Body of pancreas (tissue), 4 donors: ENCODE measurements at regions of chr13 and their contacts with region 1.

Region 1: DNA sequence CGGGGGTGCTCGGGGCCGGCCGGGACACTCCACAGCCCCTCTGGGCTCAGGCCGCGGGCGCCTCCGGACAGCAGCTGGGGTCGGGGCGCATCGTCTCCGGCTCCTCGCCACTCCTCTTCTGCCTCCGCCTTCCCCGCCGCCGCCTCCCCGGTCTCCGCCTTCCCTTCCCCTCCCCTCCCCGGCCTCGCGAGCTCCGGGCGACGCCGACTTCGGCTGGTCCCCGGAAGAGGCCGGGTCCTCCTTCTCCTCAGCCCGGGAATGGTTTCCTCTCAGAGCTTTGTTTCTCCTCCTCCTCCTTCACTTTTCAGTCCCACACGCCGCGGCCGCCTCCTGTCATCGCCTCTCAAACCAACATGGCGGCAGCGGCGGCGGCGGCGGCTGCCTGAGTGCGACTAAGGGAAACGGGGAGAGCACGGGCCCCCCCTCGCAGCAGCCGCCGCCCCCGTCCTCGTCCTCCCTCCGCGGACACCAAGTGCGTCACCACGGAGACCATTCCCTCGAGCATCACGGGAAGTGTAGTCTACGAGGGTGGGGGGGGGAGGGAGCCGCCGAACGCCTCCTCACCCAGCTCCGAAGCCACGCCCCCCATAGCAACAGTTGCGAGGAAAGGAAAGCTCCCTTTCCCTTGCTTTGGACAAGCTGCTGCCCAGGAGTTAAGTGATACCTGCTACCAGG is at the start of gene UBL3:
- DNase-seq: peak; percentile 97 to 98 (median 98)
- ATAC-seq: peak; percentile 91
- H3K4me3 ChIP-seq: peak within 1 kb of the TSS; percentile 60 to 80
- H3K27ac ChIP-seq: peak within 1 kb of the TSS; percentile 97 to 99 (median 99)
- H3K4me1 ChIP-seq: peaks cover 17% of the 10 kb centered on the region
- H3K27me3 ChIP-seq: no peaks in the 10 kb centered on the region
- CTCF ChIP-seq: no peak
- POLR2A ChIP-seq: peak; percentile 87 to 95 (median 95)
- total RNA-seq, gene UBL3: 20.4 to 33.2 TPM

Region 2: DNA sequence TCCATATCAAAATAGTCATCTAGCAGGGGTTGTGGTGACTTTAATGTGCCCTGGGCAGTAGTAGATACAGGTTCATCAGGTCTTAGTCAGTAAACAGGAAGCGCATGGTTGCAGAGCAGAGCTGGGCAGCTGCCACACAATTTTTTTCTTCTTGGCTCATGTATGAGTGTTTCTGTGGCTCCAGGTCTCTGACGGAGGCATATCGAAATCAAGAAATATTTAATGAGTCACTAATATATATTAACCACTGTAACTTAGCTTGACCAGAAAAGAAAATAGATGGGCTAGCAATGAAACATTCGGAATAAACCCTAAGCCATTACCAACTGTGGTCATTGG is 68.5 kb after region 1 on chr13:
- intact Hi-C with region 1: loop called (anchors 10 kb)
- DNase-seq: peak; percentile 50 to 78 (median 74)
- ATAC-seq: peak; percentile 70
- H3K4me3 ChIP-seq: no peak overlapping the region
- H3K27ac ChIP-seq: peak overlapping the region in 3 of 4 donors; percentile 55 to 60 (median 56)
- H3K4me1 ChIP-seq: peaks cover 27% of the 10 kb centered on the region
- H3K27me3 ChIP-seq: no peaks in the 10 kb centered on the region
- CTCF ChIP-seq: no peak
- POLR2A ChIP-seq: no peak